ENCODE measurements at regions of chr12 and their contacts with region 1.

Region 1: GRCh38 chr12:82527165-82527780 is 159.4 kb upstream of the TMTC2 start:
- DNase-seq: peak; percentile 68
- H3K4me3 Mint-ChIP-seq: no peak overlapping the region
- H3K27ac Mint-ChIP-seq: no peak overlapping the region
- H3K4me1 Mint-ChIP-seq: no peaks in the 10 kb centered on the region
- H3K27me3 Mint-ChIP-seq: no peaks in the 10 kb centered on the region

Region 2: DNA sequence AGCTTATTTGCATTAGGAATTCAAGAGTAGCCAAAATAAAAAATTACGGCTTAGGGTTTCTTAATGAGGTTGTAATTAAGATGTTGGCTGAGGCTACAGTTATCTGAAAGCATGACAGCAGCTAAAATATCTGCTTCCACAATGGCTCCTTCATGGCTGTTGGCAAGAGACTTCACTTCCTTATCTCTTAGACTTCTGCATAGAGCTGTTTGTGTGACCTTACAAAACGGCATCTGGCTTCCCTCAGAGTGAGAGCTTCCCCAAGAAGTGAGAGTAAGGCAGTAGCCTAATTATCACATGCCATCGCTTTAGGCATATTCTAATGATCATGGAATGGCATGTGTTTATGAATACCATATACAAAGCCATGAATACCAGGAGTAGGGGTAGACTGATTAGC is 226.7 kb before region 1 on chr12:
- intact Hi-C with region 1: no loop called
- DNase-seq: no peak
- H3K4me3 Mint-ChIP-seq: no peak overlapping the region
- H3K27ac Mint-ChIP-seq: no peak overlapping the region
- H3K4me1 Mint-ChIP-seq: no peaks in the 10 kb centered on the region
- H3K27me3 Mint-ChIP-seq: no peaks in the 10 kb centered on the region

Region 3: DNA sequence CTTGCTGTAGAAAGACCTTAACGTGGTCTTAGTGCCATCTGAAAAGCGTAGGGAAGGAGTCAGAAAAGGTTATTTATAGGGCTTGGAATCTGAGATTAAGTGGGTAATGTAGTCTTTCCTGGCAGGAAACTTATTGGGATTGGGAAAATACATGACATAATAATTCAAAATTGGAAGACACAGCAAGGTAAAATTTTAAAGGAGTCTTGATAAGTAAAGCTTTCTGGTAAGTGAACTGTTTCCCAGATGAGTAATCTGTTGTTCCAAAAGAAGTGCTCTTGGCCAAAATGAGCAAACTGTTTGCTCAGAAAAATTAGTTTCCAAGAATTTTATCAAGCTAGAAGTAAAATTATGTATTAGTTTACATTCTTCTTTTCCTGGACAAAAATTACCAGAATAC is 10.2 kb after region 1 on chr12:
- intact Hi-C with region 1: no loop called
- DNase-seq: no peak
- H3K4me3 Mint-ChIP-seq: no peak overlapping the region
- H3K27ac Mint-ChIP-seq: no peak overlapping the region
- H3K4me1 Mint-ChIP-seq: no peaks in the 10 kb centered on the region
- H3K27me3 Mint-ChIP-seq: peaks cover 2% of the 10 kb centered on the region

Region 4: DNA sequence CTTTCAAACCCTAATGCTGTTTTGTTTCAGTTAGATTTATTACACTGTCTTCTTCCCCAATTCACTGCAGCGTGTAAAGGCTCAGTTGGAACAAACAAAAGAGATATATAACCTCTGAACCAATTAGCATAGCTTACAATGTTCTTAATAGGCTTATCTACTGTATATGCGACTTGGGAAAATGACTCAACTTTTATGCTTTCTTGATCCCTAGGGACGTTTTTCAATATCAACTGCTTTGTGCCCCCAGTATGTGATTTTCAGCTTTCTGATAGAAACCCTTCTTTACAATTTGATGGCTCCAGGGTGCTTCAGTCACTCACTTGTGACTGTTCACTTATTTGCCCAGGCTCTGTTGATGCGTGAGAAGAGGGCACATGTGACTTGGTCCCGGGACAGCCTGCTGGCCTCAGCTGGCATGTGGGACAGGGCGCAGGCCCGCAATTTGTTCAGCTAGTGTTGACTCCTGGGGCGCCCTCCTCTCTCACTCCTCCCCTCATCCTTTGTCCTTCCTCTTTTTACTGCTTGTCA is 266.5 kb after region 1 on chr12:
- intact Hi-C with region 1: no loop called
- DNase-seq: no peak
- H3K4me3 Mint-ChIP-seq: no peak overlapping the region
- H3K27ac Mint-ChIP-seq: no peak overlapping the region
- H3K4me1 Mint-ChIP-seq: no peaks in the 10 kb centered on the region
- H3K27me3 Mint-ChIP-seq: no peaks in the 10 kb centered on the region

Region 5: GRCh38 chr12:84502907-84503787 is 1975.9 kb after region 1 on chr12:
- intact Hi-C with region 1: loop called (anchors 5 kb)
- DNase-seq: peak; percentile 65
- H3K4me3 Mint-ChIP-seq: no peak overlapping the region
- H3K27ac Mint-ChIP-seq: no peak overlapping the region
- H3K4me1 Mint-ChIP-seq: no peaks in the 10 kb centered on the region
- H3K27me3 Mint-ChIP-seq: no peaks in the 10 kb centered on the region

Measured in activated CD4-positive, alpha-beta T cell treated with anti-CD3 and anti-CD28 coated beads, Interleukin-2, amount 10 ng/mL, durations not matched to agents 24 days and 14 days (primary cell).